T-cell (primary cell): ENCODE measurements at regions of chr2 and their contacts with region 1.

Region 1: DNA sequence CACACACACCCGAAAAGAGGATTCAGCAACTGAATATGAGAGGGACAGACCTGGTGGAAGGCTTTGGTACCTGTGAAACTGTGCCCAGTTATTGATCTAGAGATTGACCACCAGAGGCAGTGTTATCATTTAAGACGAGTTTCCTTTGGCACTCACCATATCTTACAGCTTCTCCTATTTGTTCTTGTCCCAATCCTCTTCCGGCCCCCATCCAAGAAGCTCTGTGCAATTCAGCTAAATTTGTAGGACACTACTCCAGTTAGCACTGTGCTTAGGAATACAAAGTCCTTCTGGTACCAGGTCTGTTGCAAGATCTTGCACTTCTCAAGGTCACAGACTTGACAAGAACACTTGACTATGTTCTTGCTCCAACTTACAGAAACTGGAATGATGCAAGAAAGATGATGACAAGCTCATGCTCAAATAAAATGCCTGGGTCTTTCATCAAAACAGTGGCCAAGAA is 177.7 kb downstream of the TMEM247 start:
- DNase-seq: peak in 1 of 35 experiments; percentile 35
- ATAC-seq: peak in 3 of 4 experiments; percentile 38 to 56 (median 54)
- H3K4me3 ChIP-seq: no peak overlapping the region
- H3K4me3 Mint-ChIP-seq: no peak overlapping the region
- H3K27ac ChIP-seq: no peak overlapping the region
- H3K27ac Mint-ChIP-seq: no peak overlapping the region
- H3K4me1 ChIP-seq: no peaks in the 10 kb centered on the region
- H3K4me1 Mint-ChIP-seq: no peaks in the 10 kb centered on the region
- H3K27me3 ChIP-seq: peaks cover 0 to 6% of the 10 kb centered on the region in 2 experiments
- H3K27me3 Mint-ChIP-seq: peaks cover 10 to 12% of the 10 kb centered on the region in 2 donors

Region 2: GRCh38 chr2:46306330-46306751 is 350.7 kb before region 1 on chr2:
- CTCF ChIA-PET with region 1: no interaction called
- POLR2A ChIA-PET with region 1: no interaction called
- DNase-seq: no peak
- ATAC-seq: no peak
- H3K4me3 ChIP-seq: no peak overlapping the region
- H3K4me3 Mint-ChIP-seq: no peak overlapping the region
- H3K27ac ChIP-seq: no peak overlapping the region
- H3K27ac Mint-ChIP-seq: no peak overlapping the region
- H3K4me1 ChIP-seq: peaks cover 20 to 22% of the 10 kb centered on the region in 2 experiments
- H3K4me1 Mint-ChIP-seq: peaks cover 28 to 39% (median 36%) of the 10 kb centered on the region in 3 donors
- H3K27me3 ChIP-seq: peaks cover 0 to 22% of the 10 kb centered on the region in 2 experiments
- H3K27me3 Mint-ChIP-seq: peaks cover 52 to 61% of the 10 kb centered on the region in 2 donors

Region 3: GRCh38 chr2:46364797-46365457 is 292.1 kb before region 1 on chr2:
- CTCF ChIA-PET with region 1: interaction called in 1 of 2 experiments, 11 read pairs
- POLR2A ChIA-PET with region 1: no interaction called
- DNase-seq: peak in 16 of 35 experiments; percentile 7 to 75 (median 20)
- ATAC-seq: peak; percentile 45 to 63 (median 52)
- H3K4me3 ChIP-seq: no peak overlapping the region
- H3K4me3 Mint-ChIP-seq: no peak overlapping the region
- H3K27ac ChIP-seq: no peak overlapping the region
- H3K27ac Mint-ChIP-seq: no peak overlapping the region
- H3K4me1 ChIP-seq: peaks cover 6 to 19% of the 10 kb centered on the region in 2 experiments
- H3K4me1 Mint-ChIP-seq: peaks cover 31 to 43% (median 38%) of the 10 kb centered on the region in 3 donors
- H3K27me3 ChIP-seq: no peaks in the 10 kb centered on the region
- H3K27me3 Mint-ChIP-seq: no peaks in the 10 kb centered on the region

Region 4: DNA sequence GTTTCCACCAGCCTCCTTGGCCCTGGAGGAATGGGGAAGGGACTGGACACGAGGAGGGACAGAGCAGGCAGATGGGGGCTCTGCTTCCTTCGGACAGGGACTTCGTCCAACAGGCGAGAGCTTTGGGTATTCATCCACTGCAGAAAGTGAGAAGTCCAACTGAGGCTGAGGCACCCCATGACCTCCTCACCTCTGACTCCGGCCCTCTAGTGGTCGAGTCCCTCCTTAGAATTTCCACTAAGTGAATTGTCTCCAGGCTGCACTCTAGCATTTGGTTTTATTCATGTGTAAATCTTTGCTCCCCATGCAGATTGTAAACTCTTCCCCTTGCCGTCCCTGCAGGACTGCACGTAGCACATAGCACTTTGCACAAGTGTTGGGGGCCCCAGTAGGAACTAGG is 102.1 kb before region 1 on chr2:
- CTCF ChIA-PET with region 1: no interaction called
- POLR2A ChIA-PET with region 1: no interaction called
- DNase-seq: peak in 13 of 35 experiments; percentile 16 to 57 (median 28)
- ATAC-seq: peak in 3 of 4 experiments; percentile 34 to 58 (median 52)
- H3K4me3 ChIP-seq: no peak overlapping the region
- H3K4me3 Mint-ChIP-seq: no peak overlapping the region
- H3K27ac ChIP-seq: no peak overlapping the region
- H3K27ac Mint-ChIP-seq: no peak overlapping the region
- H3K4me1 ChIP-seq: peaks cover 0 to 4% of the 10 kb centered on the region in 2 experiments
- H3K4me1 Mint-ChIP-seq: peaks cover 29 to 43% (median 30%) of the 10 kb centered on the region in 3 donors
- H3K27me3 ChIP-seq: no peaks in the 10 kb centered on the region
- H3K27me3 Mint-ChIP-seq: no peaks in the 10 kb centered on the region

Region 5: DNA sequence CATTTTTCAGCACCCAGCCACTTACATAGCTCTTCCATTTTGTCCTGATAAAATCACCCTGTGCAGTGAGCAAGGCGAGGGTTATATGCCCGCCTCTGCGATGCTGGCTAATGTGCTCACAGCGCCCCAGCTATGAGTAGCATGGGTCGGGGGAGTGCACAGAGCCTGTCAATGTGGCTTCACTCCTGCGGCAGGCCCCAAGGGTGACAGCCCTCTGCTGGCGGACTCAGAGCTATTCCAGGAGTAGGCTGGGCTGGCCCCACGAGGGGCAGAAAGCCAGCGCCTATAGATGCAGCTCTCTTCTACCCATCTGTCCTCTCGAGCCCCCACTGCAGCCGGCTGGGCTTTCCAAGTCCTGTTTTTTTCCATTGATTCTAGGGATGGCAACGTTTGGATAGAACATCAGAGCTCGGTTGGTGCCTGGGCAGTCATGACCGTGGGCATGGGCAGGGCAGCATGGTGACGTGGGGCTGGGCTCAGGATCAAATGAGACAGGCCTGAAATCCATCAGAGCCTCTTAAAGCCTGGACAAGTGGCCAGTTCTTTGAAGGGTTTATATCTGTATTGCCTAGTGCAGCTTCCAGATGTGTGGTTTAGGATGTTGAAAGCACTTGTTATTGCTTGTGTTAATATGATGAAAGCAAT is 123.8 kb after region 1 on chr2:
- CTCF ChIA-PET with region 1: interaction called in 1 of 2 experiments, 12 read pairs
- POLR2A ChIA-PET with region 1: no interaction called
- DNase-seq: no peak
- ATAC-seq: no peak
- H3K4me3 ChIP-seq: no peak overlapping the region
- H3K4me3 Mint-ChIP-seq: no peak overlapping the region
- H3K27ac ChIP-seq: no peak overlapping the region
- H3K27ac Mint-ChIP-seq: no peak overlapping the region
- H3K4me1 ChIP-seq: no peaks in the 10 kb centered on the region
- H3K4me1 Mint-ChIP-seq: peaks cover 0 to 2% (median 0%) of the 10 kb centered on the region in 3 donors
- H3K27me3 ChIP-seq: peaks cover 0 to 40% of the 10 kb centered on the region in 2 experiments
- H3K27me3 Mint-ChIP-seq: peaks cover 3 to 12% of the 10 kb centered on the region in 2 donors